ENCODE measurements at regions of chr5 and their contacts with region 1.

Region 1: GRCh38 chr5:31186672-31187267 is 6.7 kb upstream of the CDH6 start:
- H3K4me3 Mint-ChIP-seq: no peak overlapping the region
- H3K27ac Mint-ChIP-seq: no peak overlapping the region
- H3K4me1 Mint-ChIP-seq: no peaks in the 10 kb centered on the region
- H3K27me3 Mint-ChIP-seq: peaks cover 15% of the 10 kb centered on the region

Region 2: DNA sequence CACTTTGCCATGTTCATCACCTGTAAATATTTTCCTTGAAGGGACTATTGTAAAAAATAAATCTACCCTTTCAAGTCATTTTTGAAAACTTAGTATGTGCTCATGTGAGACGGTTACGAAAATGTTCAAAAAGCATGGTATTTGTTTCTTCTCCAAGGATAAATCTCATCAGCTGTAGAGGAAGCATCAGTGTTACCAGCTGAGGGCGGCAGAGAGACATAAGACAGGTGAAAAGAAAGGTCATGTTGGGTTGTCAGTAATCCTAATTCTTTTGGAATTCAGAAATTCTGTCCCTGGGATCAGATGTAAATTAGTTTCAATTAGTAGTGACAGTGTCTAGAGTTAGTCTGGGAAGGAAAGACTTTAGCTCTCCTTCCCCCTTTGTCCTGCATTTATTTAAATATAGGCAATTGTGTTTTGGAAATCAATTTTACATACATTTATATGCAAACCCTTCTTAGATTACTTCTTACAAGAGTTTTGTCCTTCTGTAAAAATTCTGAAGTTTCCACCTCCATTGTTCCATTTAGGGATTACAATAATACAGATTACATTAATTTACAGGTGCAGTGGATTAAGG is 785.2 kb before region 1 on chr5:
- intact Hi-C with region 1: loop called (anchors 2 kb)
- H3K4me3 Mint-ChIP-seq: no peak overlapping the region
- H3K27ac Mint-ChIP-seq: no peak overlapping the region
- H3K4me1 Mint-ChIP-seq: no peaks in the 10 kb centered on the region
- H3K27me3 Mint-ChIP-seq: no peaks in the 10 kb centered on the region

Measured in dendritic cell treated with granulocyte-macrophage colony-stimulating factor and Interleukin-4, amounts not matched to agents 40 ng/mL and 50 ng/mL, for 4 days (primary cell).